ENCODE measurements at regions of chrX and their contacts with region 1.

Region 1: DNA sequence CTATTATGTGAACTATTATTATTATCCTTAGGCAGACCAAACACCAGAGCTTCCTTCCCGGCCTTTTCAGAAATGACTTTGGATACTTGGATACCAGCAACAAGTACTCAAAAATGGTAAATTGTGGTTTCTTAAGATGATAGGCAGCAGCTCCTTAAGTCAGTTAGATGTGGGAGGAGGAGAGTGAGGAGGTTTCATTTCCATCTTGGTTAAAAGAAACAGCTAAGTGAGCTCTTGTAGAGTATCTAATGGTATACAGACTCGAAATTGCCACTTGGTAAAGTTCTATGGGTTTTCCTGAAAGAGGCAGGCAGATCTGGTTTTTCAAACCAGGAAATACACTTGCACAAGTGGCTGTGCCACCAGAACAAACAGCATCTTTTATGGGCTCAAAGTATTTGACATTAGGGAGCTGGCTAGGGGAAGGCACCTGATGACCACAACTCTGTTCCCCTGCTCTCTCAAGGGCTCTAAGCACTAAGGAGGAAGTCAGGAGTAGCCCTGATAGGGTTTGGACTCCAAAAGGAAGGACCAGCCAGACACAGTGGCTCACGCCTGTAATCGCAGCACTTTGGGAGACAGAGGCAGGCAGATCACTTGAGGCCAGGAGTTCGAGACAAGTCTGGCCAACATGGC is 130.9 kb downstream of the TMEM164 start:
- DNase-seq: no peak
- ATAC-seq: peak; percentile 60
- H3K4me3 Mint-ChIP-seq: no peak overlapping the region
- H3K27ac Mint-ChIP-seq: peak overlapping the region; percentile 13
- H3K4me1 Mint-ChIP-seq: peaks cover 16% of the 10 kb centered on the region
- H3K27me3 Mint-ChIP-seq: no peaks in the 10 kb centered on the region

Region 2: DNA sequence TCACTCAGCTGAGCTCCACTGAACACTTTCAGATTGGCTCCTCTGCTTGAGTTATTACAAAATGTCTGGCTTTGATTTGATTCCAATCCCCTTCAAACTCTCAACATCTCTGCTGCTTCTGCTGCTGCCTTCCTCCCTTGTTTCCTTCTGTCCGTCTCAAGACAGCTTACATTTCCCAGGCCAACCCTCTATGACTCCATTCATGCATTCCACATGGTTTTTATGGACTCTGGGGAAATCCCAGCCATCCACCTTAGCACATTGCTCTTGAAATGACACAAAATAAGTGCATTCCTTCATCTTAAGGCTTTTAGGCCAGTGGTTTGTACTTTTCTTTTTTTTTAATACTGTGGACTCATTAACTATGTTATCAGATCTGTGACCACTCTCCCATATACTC is 199.4 kb before region 1 on chrX:
- CTCF ChIA-PET with region 1: no interaction called
- POLR2A ChIA-PET with region 1: no interaction called
- intact Hi-C with region 1: no loop called
- DNase-seq: no peak
- ATAC-seq: no peak
- H3K4me3 Mint-ChIP-seq: no peak overlapping the region
- H3K27ac Mint-ChIP-seq: no peak overlapping the region
- H3K4me1 Mint-ChIP-seq: no peaks in the 10 kb centered on the region
- H3K27me3 Mint-ChIP-seq: peaks cover 2% of the 10 kb centered on the region

Region 3: GRCh38 chrX:110002300-110003166 is 131.3 kb before region 1 on chrX and contains the start of gene TMEM164:
- CTCF ChIA-PET with region 1: no interaction called
- POLR2A ChIA-PET with region 1: no interaction called
- intact Hi-C with region 1: loop called in 1 of 2 experiments (anchors 5 kb)
- DNase-seq: peak; percentile 87
- ATAC-seq: peak; percentile 84
- H3K4me3 Mint-ChIP-seq: peak within 1 kb of the TSS; percentile 81
- H3K27ac Mint-ChIP-seq: peak within 1 kb of the TSS; percentile 74
- H3K4me1 Mint-ChIP-seq: peaks cover 27% of the 10 kb centered on the region
- H3K27me3 Mint-ChIP-seq: no peaks in the 10 kb centered on the region
- total RNA-seq, gene TMEM164: 10.5 to 12.2 TPM